Activated CD4-positive, alpha-beta T cell treated with anti-CD3 and anti-CD28 coated beads, Interleukin-2, amount 10 ng/mL, durations not matched to agents 24 days and 14 days (primary cell): ENCODE measurements at regions of chr19 and their contacts with region 1.

Region 1: GRCh38 chr19:35648017-35648961 is at the start of gene COX6B1:
- DNase-seq: peak; percentile 98
- H3K4me3 Mint-ChIP-seq: peak within 1 kb of the TSS; percentile 96
- H3K27ac Mint-ChIP-seq: peak within 1 kb of the TSS; percentile 88
- H3K4me1 Mint-ChIP-seq: peaks cover 31% of the 10 kb centered on the region
- H3K27me3 Mint-ChIP-seq: no peaks in the 10 kb centered on the region
- total RNA-seq, gene COX6B1: 451 and 472 TPM in 2 replicates

Region 2: DNA sequence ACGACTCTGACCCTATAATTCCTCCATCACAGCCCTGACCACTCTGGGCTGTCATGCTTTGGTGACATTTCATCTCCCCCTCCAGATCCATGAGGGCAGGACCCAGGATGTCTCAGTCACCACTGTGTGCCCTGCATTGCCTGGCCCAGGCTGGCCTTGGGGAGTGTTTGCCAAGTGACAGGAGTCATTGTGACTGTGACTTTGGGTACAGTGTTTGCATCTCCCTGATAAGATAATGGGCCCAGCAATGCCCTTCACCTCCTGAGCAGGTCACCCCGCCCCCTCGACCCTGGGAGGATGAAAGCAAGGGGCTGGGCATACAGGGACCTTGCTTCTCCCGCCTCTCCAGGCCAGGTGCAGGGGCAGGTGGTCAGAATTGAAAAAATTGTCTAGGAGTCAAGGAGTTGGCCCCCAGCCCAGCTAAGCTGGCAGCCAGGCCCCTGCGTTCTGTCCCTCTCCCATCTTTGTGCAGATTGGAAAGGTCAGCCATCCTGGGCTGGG is 79.0 kb before region 1 on chr19:
- intact Hi-C with region 1: no loop called
- DNase-seq: no peak
- H3K4me3 Mint-ChIP-seq: no peak overlapping the region
- H3K27ac Mint-ChIP-seq: no peak overlapping the region
- H3K4me1 Mint-ChIP-seq: peaks cover 2% of the 10 kb centered on the region
- H3K27me3 Mint-ChIP-seq: peaks cover 19% of the 10 kb centered on the region

Region 3: GRCh38 chr19:35612559-35613321 is 35.5 kb before region 1 on chr19 and contains the start of gene HAUS5:
- intact Hi-C with region 1: loop called (anchors 2 kb)
- DNase-seq: peak; percentile 99
- H3K4me3 Mint-ChIP-seq: peak within 1 kb of the TSS; percentile 89
- H3K27ac Mint-ChIP-seq: peak within 1 kb of the TSS; percentile 92
- H3K4me1 Mint-ChIP-seq: peaks cover 28% of the 10 kb centered on the region
- H3K27me3 Mint-ChIP-seq: no peaks in the 10 kb centered on the region
- total RNA-seq, gene HAUS5: 45.8 TPM in 2 replicates

Region 4: DNA sequence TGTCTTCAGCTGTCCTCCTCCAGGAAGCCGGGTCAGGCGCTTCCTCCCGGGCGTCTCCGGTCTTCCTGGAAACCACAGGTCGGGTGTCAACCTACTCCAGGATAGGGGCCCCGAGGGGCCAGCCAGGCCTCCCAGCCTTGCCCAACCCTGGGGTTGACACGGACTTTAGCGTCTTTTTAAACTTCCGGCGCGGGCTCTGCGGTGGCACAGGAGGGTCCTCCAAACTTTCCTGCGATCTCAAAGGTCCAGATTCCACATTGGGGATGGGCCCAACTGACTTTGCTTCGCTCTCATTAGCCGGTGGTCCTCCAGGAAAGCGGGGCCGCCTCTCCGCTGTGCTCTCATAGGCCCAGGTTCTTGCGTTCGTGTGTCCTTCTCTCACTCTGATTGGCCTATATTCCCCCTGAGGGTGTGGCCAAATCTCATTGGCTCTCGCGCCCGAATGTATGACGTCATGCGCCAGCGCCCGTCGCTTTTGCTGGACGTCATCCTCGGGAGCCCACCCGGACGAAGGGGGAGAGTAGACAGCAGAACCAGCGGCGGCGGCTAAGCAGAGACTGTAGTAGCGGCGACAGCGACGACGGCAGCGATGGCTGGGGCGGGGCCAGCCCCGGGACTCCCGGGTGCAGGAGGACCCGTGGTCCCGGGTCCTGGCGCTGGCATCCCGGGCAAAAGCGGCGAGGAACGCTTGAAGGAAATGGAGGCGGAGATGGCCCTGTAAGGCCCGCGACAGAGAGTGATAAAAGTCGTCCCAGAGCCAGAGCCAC is 19.5 kb before region 1 on chr19 and contains the start of gene RBM42:
- intact Hi-C with region 1: loop called (anchors 1 kb)
- DNase-seq: peak; percentile 99
- H3K4me3 Mint-ChIP-seq: peak within 1 kb of the TSS; percentile 99
- H3K27ac Mint-ChIP-seq: peak within 1 kb of the TSS; percentile 100
- H3K4me1 Mint-ChIP-seq: peaks cover 23% of the 10 kb centered on the region
- H3K27me3 Mint-ChIP-seq: peaks cover 2% of the 10 kb centered on the region
- total RNA-seq, gene RBM42: 114 and 115 TPM in 2 replicates

Region 5: DNA sequence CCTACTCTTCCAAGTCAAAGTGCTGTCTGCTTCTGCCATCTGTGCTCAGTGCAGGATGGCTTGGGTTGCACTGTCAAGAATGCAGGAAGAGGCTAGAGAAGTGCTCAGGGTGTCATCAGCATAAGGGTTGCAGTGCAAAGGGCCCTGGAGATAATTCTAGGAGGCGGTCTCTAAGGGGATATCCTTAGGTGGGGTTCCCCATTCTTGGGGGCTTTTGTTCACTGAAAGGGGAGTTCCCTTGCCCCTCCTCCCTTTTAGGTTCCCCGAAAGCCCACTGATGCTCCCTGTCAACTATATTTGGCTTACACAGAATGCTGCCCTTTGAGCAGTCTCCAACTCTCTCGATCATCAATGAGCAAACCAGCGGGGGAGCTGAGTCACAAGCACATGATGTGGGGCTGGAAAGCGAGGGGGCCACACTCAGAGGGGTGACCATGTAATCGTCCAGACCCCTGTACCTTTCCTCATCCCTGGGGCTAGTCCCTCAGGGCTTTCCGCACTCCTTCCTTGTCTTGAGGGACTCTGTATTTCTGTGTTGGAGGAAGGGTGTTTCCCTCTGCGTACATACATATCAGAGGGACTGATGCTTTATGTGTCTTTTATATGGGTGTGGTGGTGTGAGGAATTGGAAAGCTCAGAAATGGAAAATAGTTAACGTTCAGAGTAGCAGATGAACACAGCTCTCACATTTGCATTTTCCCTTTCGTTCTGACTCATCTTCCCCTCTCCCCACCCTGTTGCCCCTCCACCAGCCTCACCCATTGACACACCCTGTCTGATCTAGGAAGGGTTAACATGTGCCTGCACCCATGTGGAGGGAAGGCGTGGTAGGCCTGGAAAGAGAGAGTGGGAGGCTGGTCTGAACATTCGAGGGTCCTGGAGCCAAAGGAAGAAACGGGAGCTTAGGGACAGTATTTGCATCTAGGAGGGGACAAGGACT is 62.8 kb after region 1 on chr19:
- intact Hi-C with region 1: loop called (anchors 2 kb)
- DNase-seq: peak; percentile 89
- H3K4me3 Mint-ChIP-seq: peak overlapping the region; percentile 65
- H3K27ac Mint-ChIP-seq: peak overlapping the region; percentile 96
- H3K4me1 Mint-ChIP-seq: peaks cover 42% of the 10 kb centered on the region
- H3K27me3 Mint-ChIP-seq: no peaks in the 10 kb centered on the region